Posterior cingulate gyrus (tissue), 11 donors: ENCODE measurements at regions of chr6 and their contacts with region 1.

Region 1: GRCh38 chr6:84428300-84428907 is 201.0 kb upstream of the CEP162 start:
- DNase-seq: peak in 7 of 10 donors; percentile 6 to 81 (median 17)

Region 2: DNA sequence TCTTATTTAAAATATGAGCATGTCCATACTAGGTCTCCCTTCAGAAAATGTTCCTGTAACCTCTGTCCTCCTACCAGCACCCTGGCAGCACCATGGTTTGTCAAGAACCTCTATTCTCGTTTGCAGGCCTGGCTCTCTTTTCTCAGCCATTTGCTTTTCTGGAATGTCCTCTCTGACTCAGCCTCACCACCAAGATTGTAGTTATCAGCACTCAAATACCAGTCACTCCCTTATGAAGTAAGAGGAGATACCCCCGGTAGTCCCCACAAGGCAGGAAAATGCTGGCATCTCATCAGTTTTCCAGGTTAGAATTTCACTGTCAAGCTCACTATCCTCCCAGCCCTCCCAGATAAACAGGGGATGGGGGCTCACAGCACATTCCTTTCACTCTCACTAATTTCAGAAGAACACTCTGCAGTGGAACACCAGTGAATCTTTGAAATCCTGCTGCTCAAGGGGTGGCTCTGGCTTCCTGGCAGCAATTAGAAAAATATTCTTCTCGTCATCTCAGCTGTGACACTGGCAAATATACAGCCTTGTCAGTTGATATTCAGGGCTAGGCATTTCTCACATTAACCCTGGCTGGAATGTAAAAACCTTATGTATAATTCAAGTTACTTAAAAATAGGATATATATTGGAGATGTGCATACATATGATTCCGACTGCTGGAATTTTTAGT is 206.8 kb after region 1 on chr6:
- intact Hi-C with region 1: no loop called
- DNase-seq: no peak

Region 3: GRCh38 chr6:84665401-84665800 is 237.0 kb after region 1 on chr6:
- intact Hi-C with region 1: no loop called
- DNase-seq: no peak

Region 4: GRCh38 chr6:85126485-85127167 is 698.2 kb after region 1 on chr6:
- intact Hi-C with region 1: loop called (anchors 2 kb)
- DNase-seq: peak; percentile 15 to 92 (median 42)

Region 5: GRCh38 chr6:85323435-85324040 is 895.1 kb after region 1 on chr6:
- intact Hi-C with region 1: loop called (anchors 10 kb)
- DNase-seq: peak in 8 of 10 donors; percentile 29 to 94 (median 78)